ENCODE measurements at regions of chr10 and their contacts with region 1.

Region 1: GRCh38 chr10:15168781-15169554 is 475 bp upstream of the NMT2 start:
- DNase-seq: peak; percentile 99
- H3K4me3 Mint-ChIP-seq: peak overlapping the region; percentile 74
- H3K27ac Mint-ChIP-seq: peak overlapping the region; percentile 76
- H3K4me1 Mint-ChIP-seq: peaks cover 49% of the 10 kb centered on the region
- H3K27me3 Mint-ChIP-seq: no peaks in the 10 kb centered on the region

Region 2: DNA sequence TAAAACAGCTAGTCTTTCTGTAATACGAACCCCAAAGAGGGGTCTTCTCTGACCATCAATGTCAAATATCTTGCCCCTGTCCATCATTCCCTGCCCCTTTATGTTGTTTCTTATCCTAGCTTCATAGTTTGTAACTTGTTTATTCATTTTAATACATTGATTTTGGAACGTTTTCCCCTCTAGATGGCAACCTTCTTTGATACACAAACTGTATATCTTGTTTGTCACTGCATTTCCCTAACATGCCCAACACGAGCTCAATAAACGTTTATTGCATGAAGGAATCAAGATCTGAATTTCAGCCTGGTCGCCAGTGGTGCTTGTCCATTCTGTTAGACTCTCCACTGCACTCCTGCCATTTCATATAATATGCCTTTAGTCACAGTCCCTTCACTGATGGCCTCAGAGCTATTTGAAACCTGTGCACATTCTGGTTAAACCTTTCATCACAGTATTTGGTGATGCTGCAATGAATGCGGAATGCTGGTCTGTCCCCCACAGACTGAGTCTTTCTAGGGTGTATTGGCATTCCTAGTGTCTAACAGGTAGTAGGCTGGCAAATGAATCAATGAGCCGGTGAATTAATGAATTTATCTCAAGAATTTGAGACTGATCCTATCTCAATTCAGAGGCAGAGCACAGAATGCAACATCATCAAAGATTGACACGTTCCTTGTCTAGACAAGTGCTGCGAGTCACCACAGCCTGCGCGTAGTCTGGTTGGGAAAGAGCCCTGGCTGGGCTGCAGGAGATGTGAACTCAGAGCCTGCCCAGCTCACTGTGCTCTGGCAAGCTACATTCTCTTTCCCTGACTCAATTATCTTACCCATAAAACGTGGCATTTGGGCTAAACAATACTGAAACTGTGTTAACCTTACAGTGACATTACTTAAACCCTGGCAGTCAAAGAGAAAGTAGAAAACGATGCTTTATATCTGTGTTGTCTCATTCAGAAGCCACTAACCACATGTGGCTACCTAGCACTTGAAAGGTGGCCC is 783.1 kb before region 1 on chr10:
- CTCF ChIA-PET with region 1: no interaction called
- intact Hi-C with region 1: loop called (anchors 5 kb)
- DNase-seq: peak; percentile 67
- H3K4me3 Mint-ChIP-seq: no peak overlapping the region
- H3K27ac Mint-ChIP-seq: no peak overlapping the region
- H3K4me1 Mint-ChIP-seq: peaks cover 80% of the 10 kb centered on the region
- H3K27me3 Mint-ChIP-seq: peaks cover 3% of the 10 kb centered on the region

Region 3: DNA sequence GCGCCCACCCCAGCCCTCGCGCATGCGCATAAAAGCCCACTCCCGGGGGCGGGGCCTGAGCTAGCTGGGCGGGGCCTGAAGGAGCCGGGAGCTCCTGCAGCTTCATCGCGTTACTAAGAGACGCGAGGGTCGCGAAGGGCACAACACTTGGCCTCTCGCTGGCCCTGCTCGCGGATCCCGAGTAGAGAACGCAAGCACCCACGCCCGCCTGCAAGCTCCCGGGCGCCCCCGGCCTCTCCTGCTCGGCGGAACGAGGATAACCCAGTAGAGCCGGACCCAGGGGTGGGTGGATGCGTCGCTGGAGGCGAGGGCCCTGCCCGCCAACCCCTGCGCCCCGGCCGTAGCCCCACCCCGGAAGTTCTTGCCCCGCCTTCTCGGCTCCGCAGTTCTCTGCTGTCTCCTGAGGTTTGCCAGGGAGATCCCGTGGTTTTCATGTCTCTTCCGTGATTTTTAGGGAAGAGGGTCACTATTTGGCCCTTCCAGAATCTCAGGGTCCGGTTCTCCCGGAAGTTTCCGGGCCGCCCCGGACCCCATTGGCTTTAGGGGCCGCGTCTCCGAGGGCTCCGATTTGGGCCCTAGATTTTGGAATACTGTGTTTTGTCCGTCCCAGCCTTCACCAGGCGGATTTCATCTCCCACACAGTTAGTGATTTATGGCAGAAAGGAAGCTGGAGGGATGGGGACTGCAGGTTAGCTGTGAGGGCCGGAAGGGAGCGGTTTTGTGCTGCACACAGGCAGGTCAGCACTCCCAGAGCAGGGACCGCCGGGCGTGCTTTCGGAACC is 209.5 kb before region 1 on chr10 and contains the start of gene MEIG1:
- CTCF ChIA-PET with region 1: no interaction called
- intact Hi-C with region 1: loop called (anchors 1 kb)
- DNase-seq: peak; percentile 91
- H3K4me3 Mint-ChIP-seq: peak within 1 kb of the TSS; percentile 98
- H3K27ac Mint-ChIP-seq: peak within 1 kb of the TSS; percentile 98
- H3K4me1 Mint-ChIP-seq: peaks cover 27% of the 10 kb centered on the region
- H3K27me3 Mint-ChIP-seq: no peaks in the 10 kb centered on the region
- total RNA-seq, gene MEIG1: 0.81 to 0.93 TPM

Region 4: GRCh38 chr10:15097011-15097812 is 71.8 kb before region 1 on chr10 and contains the start of gene RPP38:
- CTCF ChIA-PET with region 1: no interaction called
- intact Hi-C with region 1: loop called (anchors 1 kb)
- DNase-seq: peak; percentile 96
- H3K4me3 Mint-ChIP-seq: peak within 1 kb of the TSS; percentile 97
- H3K27ac Mint-ChIP-seq: peak within 1 kb of the TSS; percentile 94
- H3K4me1 Mint-ChIP-seq: peaks cover 36% of the 10 kb centered on the region
- H3K27me3 Mint-ChIP-seq: no peaks in the 10 kb centered on the region
- total RNA-seq, gene RPP38: 15.6 to 16.3 TPM

Region 5: GRCh38 chr10:15188603-15189002 is 19.6 kb after region 1 on chr10:
- CTCF ChIA-PET with region 1: no interaction called
- intact Hi-C with region 1: loop called (anchors 1 kb)
- DNase-seq: peak; percentile 75
- H3K4me3 Mint-ChIP-seq: no peak overlapping the region
- H3K27ac Mint-ChIP-seq: peak overlapping the region; percentile 74
- H3K4me1 Mint-ChIP-seq: peaks cover 43% of the 10 kb centered on the region
- H3K27me3 Mint-ChIP-seq: no peaks in the 10 kb centered on the region

Region 6: GRCh38 chr10:15370856-15371701 is 202.1 kb after region 1 on chr10 and contains the start of gene FAM171A1:
- CTCF ChIA-PET with region 1: interaction called, 4 read pairs
- intact Hi-C with region 1: loop called (anchors 1 kb)
- DNase-seq: peak; percentile 76
- H3K4me3 Mint-ChIP-seq: peak within 1 kb of the TSS; percentile 70
- H3K27ac Mint-ChIP-seq: no peak within 1 kb of the TSS
- H3K4me1 Mint-ChIP-seq: peaks cover 8% of the 10 kb centered on the region
- H3K27me3 Mint-ChIP-seq: peaks cover 3% of the 10 kb centered on the region
- total RNA-seq, gene FAM171A1: 4.8 to 5.2 TPM

Measured in activated naive CD4-positive, alpha-beta T cell treated with anti-CD3 and anti-CD28 coated beads for 36 hours (primary cell).